Common myeloid progenitor, CD34-positive (primary cell): ENCODE measurements at regions of chr9 and their contacts with region 1.

Region 1: DNA sequence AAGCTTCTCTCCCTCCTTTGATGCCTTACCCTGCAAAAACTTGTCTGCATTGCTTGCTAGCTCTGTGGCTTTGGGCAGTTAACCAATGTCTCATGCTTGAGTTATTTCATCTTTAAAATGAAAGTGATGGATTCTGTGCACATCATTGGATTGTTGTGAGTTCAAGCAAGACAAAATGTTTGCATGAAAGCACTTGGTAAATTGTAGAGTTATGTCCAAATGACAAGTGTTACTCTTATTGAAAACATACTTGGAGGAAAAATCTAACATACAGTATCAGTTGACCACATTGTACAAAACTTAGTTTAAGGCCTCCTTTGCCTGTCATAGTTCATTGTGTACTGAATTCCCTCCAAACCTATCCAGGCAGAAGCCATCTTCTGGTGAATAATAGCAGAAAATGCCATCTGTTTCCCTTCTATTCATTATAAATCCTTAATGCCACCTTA is 30.0 kb downstream of the TGFBR1 start:
- DNase-seq: peak in 2 of 3 donors; percentile 56 to 59
- H3K4me3 ChIP-seq: peak overlapping the region in 1 of 7 experiments; percentile 19
- H3K27ac ChIP-seq: no peak overlapping the region
- H3K4me1 ChIP-seq: peaks cover 34 to 64% (median 51%) of the 10 kb centered on the region in 4 experiments
- H3K27me3 ChIP-seq: no peaks in the 10 kb centered on the region

Region 2: DNA sequence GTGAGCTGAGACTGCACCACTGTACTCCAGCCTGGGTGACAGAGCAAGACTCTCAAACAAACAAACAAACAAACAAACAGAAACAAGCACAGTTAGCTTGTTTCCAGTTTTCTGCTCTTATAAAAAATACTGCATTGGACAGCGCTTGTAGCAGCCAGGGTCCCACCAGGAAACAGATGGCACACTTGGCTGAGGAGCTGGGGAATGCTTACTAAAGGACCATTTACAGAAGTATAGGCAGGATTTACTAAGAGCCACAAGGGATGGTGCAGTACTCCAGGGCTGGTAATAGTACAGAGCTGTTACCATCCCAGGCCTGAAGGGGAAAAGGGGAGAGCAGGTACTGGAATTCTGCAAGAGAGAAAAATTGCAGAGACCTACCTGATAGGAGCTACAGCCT is 333.4 kb before region 1 on chr9:
- CTCF ChIA-PET with region 1: no interaction called
- POLR2A ChIA-PET with region 1: interaction called, 10 read pairs
- DNase-seq: no peak
- H3K4me3 ChIP-seq: no peak overlapping the region
- H3K27ac ChIP-seq: no peak overlapping the region
- H3K4me1 ChIP-seq: peaks cover 0 to 8% (median 5%) of the 10 kb centered on the region in 4 experiments
- H3K27me3 ChIP-seq: peaks cover 0 to 2% (median 0%) of the 10 kb centered on the region in 5 experiments

Region 3: GRCh38 chr9:99211741-99212140 is 76.8 kb after region 1 on chr9:
- CTCF ChIA-PET with region 1: no interaction called
- POLR2A ChIA-PET with region 1: no interaction called
- DNase-seq: no peak
- H3K4me3 ChIP-seq: no peak overlapping the region
- H3K27ac ChIP-seq: no peak overlapping the region
- H3K4me1 ChIP-seq: peaks cover 2 to 18% (median 8%) of the 10 kb centered on the region in 4 experiments
- H3K27me3 ChIP-seq: no peaks in the 10 kb centered on the region

Region 4: GRCh38 chr9:99231711-99232110 is 96.8 kb after region 1 on chr9:
- CTCF ChIA-PET with region 1: no interaction called
- POLR2A ChIA-PET with region 1: no interaction called
- DNase-seq: peak; percentile 32 to 66 (median 64)
- H3K4me3 ChIP-seq: no peak overlapping the region
- H3K27ac ChIP-seq: no peak overlapping the region
- H3K4me1 ChIP-seq: peaks cover 4 to 20% (median 10%) of the 10 kb centered on the region in 4 experiments
- H3K27me3 ChIP-seq: no peaks in the 10 kb centered on the region